Naive thymus-derived CD4-positive, alpha-beta T cell (primary cell): ENCODE measurements at regions of chr1 and their contacts with region 1.

Region 1: GRCh38 chr1:180365039-180365438 is 135.0 kb downstream of the LHX4 start:
- DNase-seq: no peak
- ATAC-seq: no peak
- H3K4me3 ChIP-seq: no peak overlapping the region
- H3K4me3 Mint-ChIP-seq: no peak overlapping the region
- H3K27ac ChIP-seq: no peak overlapping the region
- H3K27ac Mint-ChIP-seq: no peak overlapping the region
- H3K4me1 ChIP-seq: no peaks in the 10 kb centered on the region
- H3K4me1 Mint-ChIP-seq: peaks cover 0 to 33% (median 6%) of the 10 kb centered on the region in 7 donors
- H3K27me3 ChIP-seq: no peaks in the 10 kb centered on the region
- H3K27me3 Mint-ChIP-seq: no peaks in the 10 kb centered on the region

Region 2: GRCh38 chr1:179867807-179868330 is 497.2 kb before region 1 on chr1:
- CTCF ChIA-PET with region 1: no interaction called
- POLR2A ChIA-PET with region 1: no interaction called
- intact Hi-C with region 1: no loop called
- DNase-seq: peak; percentile 17 to 58 (median 46)
- ATAC-seq: peak; percentile 85
- H3K4me3 ChIP-seq: no peak overlapping the region
- H3K4me3 Mint-ChIP-seq: no peak overlapping the region
- H3K27ac ChIP-seq: no peak overlapping the region
- H3K27ac Mint-ChIP-seq: peak overlapping the region in 5 of 9 donors; percentile 1 to 54 (median 36)
- H3K4me1 ChIP-seq: peaks cover 0 to 8% of the 10 kb centered on the region in 2 donors
- H3K4me1 Mint-ChIP-seq: peaks cover 12 to 43% (median 25%) of the 10 kb centered on the region in 7 donors
- H3K27me3 ChIP-seq: no peaks in the 10 kb centered on the region
- H3K27me3 Mint-ChIP-seq: no peaks in the 10 kb centered on the region

Region 3: DNA sequence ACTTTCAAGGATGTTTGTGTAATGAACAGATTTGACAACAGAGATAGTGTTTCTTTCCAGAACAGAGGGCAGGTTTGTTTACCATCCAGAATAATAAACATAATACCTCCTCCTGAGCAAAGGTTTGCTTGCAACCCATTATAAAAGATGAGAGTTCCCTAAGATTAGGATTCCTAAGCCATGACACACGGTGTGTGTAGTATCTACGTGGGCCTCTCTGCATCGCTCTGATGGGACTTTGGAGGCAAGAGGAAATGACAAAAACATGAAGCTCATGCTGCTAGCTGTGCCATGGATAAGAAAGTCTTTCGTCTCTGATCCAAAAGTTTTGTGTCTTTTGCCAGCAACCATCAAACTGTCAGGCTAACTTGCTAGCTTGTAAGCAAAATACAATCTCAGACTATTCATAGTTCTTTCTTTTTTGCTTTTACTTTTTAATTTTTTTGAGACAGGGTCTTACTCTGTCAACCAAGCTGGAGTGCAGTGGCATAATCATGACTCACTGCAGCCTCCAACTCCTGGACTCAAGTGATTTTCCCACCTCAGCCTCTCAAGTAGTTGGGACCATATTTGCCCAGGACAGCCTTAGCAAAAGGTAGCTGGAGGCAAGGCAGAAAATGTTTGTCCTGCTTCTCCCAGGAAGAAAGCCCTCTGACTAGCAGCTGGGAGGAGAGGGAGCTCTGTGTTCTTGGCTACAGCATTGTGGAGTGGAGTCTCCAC is 53.9 kb before region 1 on chr1:
- CTCF ChIA-PET with region 1: no interaction called
- POLR2A ChIA-PET with region 1: no interaction called
- intact Hi-C with region 1: loop called in 1 of 2 experiments (anchors 2 kb)
- DNase-seq: no peak
- ATAC-seq: no peak
- H3K4me3 ChIP-seq: no peak overlapping the region
- H3K4me3 Mint-ChIP-seq: no peak overlapping the region
- H3K27ac ChIP-seq: no peak overlapping the region
- H3K27ac Mint-ChIP-seq: no peak overlapping the region
- H3K4me1 ChIP-seq: no peaks in the 10 kb centered on the region
- H3K4me1 Mint-ChIP-seq: peaks cover 0 to 6% (median 0%) of the 10 kb centered on the region in 7 donors
- H3K27me3 ChIP-seq: no peaks in the 10 kb centered on the region
- H3K27me3 Mint-ChIP-seq: no peaks in the 10 kb centered on the region